ENCODE measurements at regions of chr4 and their contacts with region 1.

Region 1: GRCh38 chr4:113106108-113106507 is 56.7 kb downstream of the ANK2 start:
- DNase-seq: no peak
- ATAC-seq: peak; percentile 53 to 87
- H3K4me3 ChIP-seq: no peak overlapping the region
- H3K27ac ChIP-seq: no peak overlapping the region
- H3K4me1 ChIP-seq: no peaks in the 10 kb centered on the region
- H3K27me3 ChIP-seq: no peaks in the 10 kb centered on the region
- CTCF ChIP-seq: peak; percentile 48 to 62 (median 55)
- POLR2A ChIP-seq: no peak

Region 2: DNA sequence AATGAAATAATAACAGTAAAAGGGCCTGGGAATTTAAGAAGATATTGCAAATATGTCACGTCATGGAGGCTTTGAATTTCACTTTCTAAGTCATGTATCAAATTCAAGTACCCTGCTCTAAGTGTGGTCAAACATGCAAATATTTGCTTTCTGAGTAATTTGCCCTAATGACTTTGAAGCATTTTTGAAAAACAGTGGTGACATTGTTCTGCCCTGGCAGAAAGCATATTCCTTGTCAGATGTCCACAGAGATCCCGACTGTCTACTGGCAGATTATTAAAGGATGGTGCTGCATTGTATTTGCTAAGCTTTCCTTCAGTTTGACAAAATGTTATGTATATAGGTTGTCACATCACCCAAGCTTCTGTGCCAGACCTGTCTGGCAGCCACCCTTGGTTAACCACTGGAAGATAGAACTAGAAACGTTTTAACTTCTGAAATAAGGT is 35.8 kb after region 1 on chr4:
- in situ Hi-C with region 1: no loop called
- intact Hi-C with region 1: loop called (anchors 5 kb)
- DNase-seq: no peak
- ATAC-seq: no peak
- H3K4me3 ChIP-seq: peak overlapping the region in 1 of 4 donors; percentile 13
- H3K27ac ChIP-seq: peak overlapping the region in 2 of 4 donors; percentile 18 to 26
- H3K4me1 ChIP-seq: peaks cover 9 to 20% of the 10 kb centered on the region in 2 donors
- H3K27me3 ChIP-seq: no peaks in the 10 kb centered on the region
- CTCF ChIP-seq: no peak
- POLR2A ChIP-seq: no peak

Region 3: DNA sequence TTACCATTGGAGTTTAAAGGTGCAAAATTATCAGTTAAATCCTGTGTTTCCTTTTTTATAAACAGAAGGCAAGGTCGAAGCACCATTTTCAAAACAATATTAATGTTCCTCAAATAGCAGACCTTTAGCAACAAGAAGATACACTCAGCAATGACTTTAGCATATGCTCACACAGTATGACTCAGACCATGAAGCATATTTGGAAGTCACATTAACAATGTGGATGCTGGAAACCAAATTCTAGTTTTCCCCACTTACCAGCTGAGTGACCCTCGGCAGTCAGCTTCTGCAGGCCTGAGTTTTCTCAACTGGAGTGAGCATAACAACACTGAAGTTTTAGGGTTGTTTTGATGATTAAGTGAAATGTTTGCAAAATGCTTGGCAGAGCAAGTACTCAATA is 73.9 kb after region 1 on chr4:
- in situ Hi-C with region 1: no loop called
- intact Hi-C with region 1: loop called (anchors 2 kb)
- DNase-seq: no peak
- ATAC-seq: peak; percentile 51 to 61
- H3K4me3 ChIP-seq: peak overlapping the region; percentile 9 to 24 (median 22)
- H3K27ac ChIP-seq: peak overlapping the region; percentile 77 to 85 (median 83)
- H3K4me1 ChIP-seq: peaks cover 46 to 64% of the 10 kb centered on the region in 2 donors
- H3K27me3 ChIP-seq: no peaks in the 10 kb centered on the region
- CTCF ChIP-seq: no peak
- POLR2A ChIP-seq: no peak

Region 4: DNA sequence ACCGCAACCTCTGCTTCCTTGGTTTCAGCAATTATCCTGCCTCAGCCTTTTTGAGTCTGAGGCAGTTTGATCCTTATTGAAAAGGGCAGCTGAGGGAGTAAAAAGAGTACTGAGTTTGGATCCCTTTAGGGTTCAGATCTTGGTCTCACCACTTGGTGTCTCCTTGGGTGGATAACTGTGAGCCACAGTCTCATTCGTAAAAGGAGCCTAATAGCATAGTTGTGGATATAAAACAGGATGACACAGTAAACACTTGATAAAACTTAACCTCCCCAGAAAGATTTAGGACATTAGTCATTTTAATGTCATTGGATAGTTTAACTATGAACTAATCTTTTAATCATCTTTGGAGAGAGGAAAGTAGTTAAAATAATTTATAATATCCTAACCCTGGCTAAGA is 116.4 kb after region 1 on chr4:
- in situ Hi-C with region 1: loop called in 1 of 4 experiments (anchors 25 kb)
- intact Hi-C with region 1: no loop called
- DNase-seq: no peak
- ATAC-seq: no peak
- H3K4me3 ChIP-seq: no peak overlapping the region
- H3K27ac ChIP-seq: no peak overlapping the region
- H3K4me1 ChIP-seq: no peaks in the 10 kb centered on the region
- H3K27me3 ChIP-seq: no peaks in the 10 kb centered on the region
- CTCF ChIP-seq: no peak
- POLR2A ChIP-seq: no peak

Region 5: DNA sequence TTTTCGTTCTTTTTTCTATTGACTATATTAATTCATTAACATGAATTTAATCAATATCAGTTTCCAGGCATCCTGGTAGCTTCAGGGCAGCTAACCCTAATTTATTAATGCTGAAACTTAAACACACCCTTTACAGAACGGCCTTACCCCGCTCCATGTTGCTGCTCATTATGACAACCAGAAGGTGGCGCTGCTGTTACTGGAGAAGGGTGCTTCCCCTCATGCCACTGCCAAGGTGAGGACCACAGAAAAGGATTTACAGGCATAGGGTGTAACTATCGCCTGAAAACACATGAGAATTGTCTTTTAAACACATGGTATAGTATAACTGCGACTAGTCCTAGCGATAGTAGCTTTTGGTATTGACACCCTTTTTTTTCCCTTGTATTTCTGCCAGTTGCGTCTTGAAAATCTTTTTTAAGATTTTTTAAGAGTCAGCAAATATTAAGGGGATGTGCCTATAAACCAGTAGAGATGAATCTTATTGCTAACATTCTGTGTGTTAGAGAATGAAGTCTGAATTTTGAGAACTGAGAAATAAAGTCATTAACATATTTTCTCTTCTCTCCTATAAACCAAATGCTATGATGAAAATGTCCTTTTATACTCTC is 172.3 kb after region 1 on chr4:
- in situ Hi-C with region 1: loop called in 2 of 4 experiments (anchors 25 kb)
- intact Hi-C with region 1: no loop called
- DNase-seq: peak; percentile 10 to 45
- ATAC-seq: peak in 1 of 2 donors; percentile 61
- H3K4me3 ChIP-seq: no peak overlapping the region
- H3K27ac ChIP-seq: no peak overlapping the region
- H3K4me1 ChIP-seq: no peaks in the 10 kb centered on the region
- H3K27me3 ChIP-seq: no peaks in the 10 kb centered on the region
- CTCF ChIP-seq: peak in 4 of 5 experiments; percentile 24 to 61 (median 50)
- POLR2A ChIP-seq: no peak